HCT116 (cell line): ENCODE measurements at regions of chr1 and their contacts with region 1.

Region 1: DNA sequence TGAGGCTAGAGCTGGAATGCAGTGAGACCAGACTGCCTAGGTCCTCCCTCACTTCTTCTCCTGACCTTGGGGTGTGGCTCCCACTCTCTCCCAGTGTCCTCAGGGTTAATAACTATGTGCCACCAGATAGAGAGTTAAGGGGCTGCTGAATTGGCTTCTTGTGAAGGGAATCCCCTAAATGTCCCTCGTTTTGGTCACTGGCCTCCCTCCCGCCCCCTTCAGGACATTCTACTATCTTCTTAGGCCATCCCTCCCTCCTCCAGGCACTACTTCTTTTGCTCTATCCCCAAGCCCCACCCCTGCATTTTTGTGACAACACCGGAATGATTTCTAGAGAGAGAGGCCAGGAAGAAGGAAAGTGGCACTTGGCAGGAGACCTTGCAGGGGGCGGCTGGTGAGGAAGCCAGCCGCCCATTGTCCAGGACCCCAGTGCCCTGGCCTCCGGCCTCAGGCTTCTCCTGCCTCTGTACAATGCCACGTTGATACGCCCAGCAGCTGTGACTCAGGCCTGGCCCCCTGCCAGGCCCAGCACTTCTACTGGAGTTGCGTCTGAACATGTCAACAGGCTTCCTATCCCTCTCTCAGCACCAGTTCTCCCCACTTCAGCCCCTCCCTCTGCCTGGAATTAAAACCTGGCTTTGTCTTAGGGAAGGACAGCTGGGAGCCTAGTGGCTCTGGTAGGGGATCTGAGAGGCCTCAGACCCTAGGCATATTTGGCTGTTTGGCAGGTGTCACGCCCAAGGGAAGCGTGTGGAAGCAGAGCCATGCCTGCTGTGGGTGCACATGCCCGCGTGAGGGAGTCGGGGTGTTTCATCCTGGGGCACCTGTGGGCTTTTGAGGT is 9.1 kb downstream of the LMNA start:
- DNase-seq: peak; percentile 91
- ATAC-seq: peak; percentile 39
- H3K4me3 ChIP-seq: peak overlapping the region; percentile 19 to 52
- H3K27ac ChIP-seq: peak overlapping the region; percentile 95
- H3K4me1 ChIP-seq: peaks cover 78 to 100% of the 10 kb centered on the region in 2 experiments
- H3K27me3 ChIP-seq: no peaks in the 10 kb centered on the region
- CTCF ChIP-seq: peak in 1 of 3 experiments; percentile 44; a peak in 3 of 6 replicates
- POLR2A ChIP-seq: no peak
- RAD21 ChIP-seq: no peak

Region 2: DNA sequence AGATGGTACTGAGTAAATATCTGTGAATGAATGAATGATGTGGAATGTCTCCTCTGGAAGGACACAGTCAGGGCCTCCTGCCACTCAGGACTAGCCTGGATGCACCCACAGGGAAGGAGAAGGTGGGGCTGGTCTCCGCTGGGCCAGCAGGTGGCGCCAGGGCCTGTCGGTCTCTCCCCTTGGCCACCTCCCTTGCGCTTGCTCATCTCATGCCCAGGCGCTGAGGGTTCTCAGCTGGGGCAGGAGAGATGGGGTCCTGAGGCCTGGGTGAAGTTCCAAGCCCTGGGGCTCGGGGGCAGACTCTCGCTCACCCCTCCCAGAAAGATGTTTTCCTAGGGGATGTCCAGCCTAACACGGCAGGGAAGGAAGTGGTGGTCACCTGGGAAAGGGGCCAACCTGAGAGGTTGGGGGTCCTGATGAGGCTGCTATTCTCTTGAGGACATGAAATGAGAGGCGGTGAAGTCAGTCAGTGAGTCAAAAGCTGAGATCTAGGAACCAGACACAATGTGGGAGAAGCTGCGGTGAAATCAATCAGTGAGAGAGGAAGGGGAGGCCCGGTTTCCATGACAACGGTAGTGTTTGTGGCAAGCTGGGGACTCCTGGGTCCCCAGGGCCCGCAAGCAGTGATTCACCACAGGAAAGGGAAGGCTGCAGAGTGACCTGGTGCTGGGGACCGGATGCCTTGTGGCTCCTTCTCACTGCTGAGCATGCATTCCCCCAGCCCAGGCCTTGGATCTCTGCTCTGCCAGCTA is 26.8 kb before region 1 on chr1:
- CTCF ChIA-PET with region 1: interaction called, 189 read pairs
- POLR2A ChIA-PET with region 1: interaction called, 56 read pairs
- RAD21 ChIA-PET with region 1: interaction called, 32 to 43 read pairs
- intact Hi-C with region 1: no loop called
- DNase-seq: peak; percentile 54
- ATAC-seq: peak; percentile 96
- H3K4me3 ChIP-seq: no peak overlapping the region
- H3K27ac ChIP-seq: peak overlapping the region; percentile 30
- H3K4me1 ChIP-seq: peaks cover 33 to 66% of the 10 kb centered on the region in 2 experiments
- H3K27me3 ChIP-seq: no peaks in the 10 kb centered on the region
- CTCF ChIP-seq: peak in 2 of 3 experiments; percentile 98 to 99; a peak in 4 of 6 replicates
- POLR2A ChIP-seq: no peak
- RAD21 ChIP-seq: no peak